PC-9 (cell line): ENCODE measurements at regions of chr3 and their contacts with region 1.

Region 1: GRCh38 chr3:176286476-176287085 is 910.7 kb downstream of the TBL1XR1 start:
- DNase-seq: no peak
- H3K4me3 ChIP-seq: no peak overlapping the region
- H3K27ac ChIP-seq: no peak overlapping the region
- H3K4me1 ChIP-seq: no peaks in the 10 kb centered on the region
- H3K27me3 ChIP-seq: no peaks in the 10 kb centered on the region
- CTCF ChIP-seq: no peak

Region 2: GRCh38 chr3:175648899-175649298 is 637.7 kb before region 1 on chr3:
- CTCF ChIA-PET with region 1: interaction called, 10 read pairs
- POLR2A ChIA-PET with region 1: no interaction called
- intact Hi-C with region 1: no loop called
- DNase-seq: no peak
- H3K4me3 ChIP-seq: no peak overlapping the region
- H3K27ac ChIP-seq: no peak overlapping the region
- H3K4me1 ChIP-seq: no peaks in the 10 kb centered on the region
- H3K27me3 ChIP-seq: no peaks in the 10 kb centered on the region
- CTCF ChIP-seq: no peak

Region 3: GRCh38 chr3:175941356-175941755 is 345.2 kb before region 1 on chr3:
- CTCF ChIA-PET with region 1: no interaction called
- POLR2A ChIA-PET with region 1: no interaction called
- intact Hi-C with region 1: no loop called
- DNase-seq: peak in 1 of 2 experiments; percentile 30
- H3K4me3 ChIP-seq: no peak overlapping the region
- H3K27ac ChIP-seq: no peak overlapping the region
- H3K4me1 ChIP-seq: no peaks in the 10 kb centered on the region
- H3K27me3 ChIP-seq: no peaks in the 10 kb centered on the region
- CTCF ChIP-seq: peak; percentile 71

Region 4: DNA sequence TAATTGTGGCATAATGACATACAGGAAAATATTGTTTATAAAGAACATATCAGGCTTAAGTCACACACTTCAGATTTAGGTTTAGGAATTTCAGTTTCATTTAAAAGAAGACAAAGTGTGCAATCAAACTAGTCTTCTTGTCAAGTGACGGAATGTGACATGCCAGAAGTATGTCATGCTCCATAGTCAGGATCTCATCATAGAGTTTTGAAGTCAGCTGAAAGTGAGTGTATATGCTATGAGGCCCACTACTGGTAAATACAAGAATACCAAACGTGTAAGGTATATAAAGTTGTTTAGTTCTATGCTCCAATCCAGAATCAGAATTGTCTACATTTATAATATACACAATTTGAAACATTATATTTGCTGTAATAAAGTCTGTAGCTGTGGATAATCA is 77.7 kb before region 1 on chr3:
- CTCF ChIA-PET with region 1: no interaction called
- POLR2A ChIA-PET with region 1: no interaction called
- intact Hi-C with region 1: no loop called
- DNase-seq: no peak
- H3K4me3 ChIP-seq: no peak overlapping the region
- H3K27ac ChIP-seq: no peak overlapping the region
- H3K4me1 ChIP-seq: no peaks in the 10 kb centered on the region
- H3K27me3 ChIP-seq: no peaks in the 10 kb centered on the region
- CTCF ChIP-seq: peak; percentile 24; the same call in 1 of the 2 replicates

Region 5: GRCh38 chr3:176395240-176395639 is 108.7 kb after region 1 on chr3:
- CTCF ChIA-PET with region 1: no interaction called
- POLR2A ChIA-PET with region 1: no interaction called
- intact Hi-C with region 1: no loop called
- DNase-seq: no peak
- H3K4me3 ChIP-seq: no peak overlapping the region
- H3K27ac ChIP-seq: no peak overlapping the region
- H3K4me1 ChIP-seq: no peaks in the 10 kb centered on the region
- H3K27me3 ChIP-seq: no peaks in the 10 kb centered on the region
- CTCF ChIP-seq: no peak